ENCODE measurements at regions of chr6 and their contacts with region 1.

Region 1: DNA sequence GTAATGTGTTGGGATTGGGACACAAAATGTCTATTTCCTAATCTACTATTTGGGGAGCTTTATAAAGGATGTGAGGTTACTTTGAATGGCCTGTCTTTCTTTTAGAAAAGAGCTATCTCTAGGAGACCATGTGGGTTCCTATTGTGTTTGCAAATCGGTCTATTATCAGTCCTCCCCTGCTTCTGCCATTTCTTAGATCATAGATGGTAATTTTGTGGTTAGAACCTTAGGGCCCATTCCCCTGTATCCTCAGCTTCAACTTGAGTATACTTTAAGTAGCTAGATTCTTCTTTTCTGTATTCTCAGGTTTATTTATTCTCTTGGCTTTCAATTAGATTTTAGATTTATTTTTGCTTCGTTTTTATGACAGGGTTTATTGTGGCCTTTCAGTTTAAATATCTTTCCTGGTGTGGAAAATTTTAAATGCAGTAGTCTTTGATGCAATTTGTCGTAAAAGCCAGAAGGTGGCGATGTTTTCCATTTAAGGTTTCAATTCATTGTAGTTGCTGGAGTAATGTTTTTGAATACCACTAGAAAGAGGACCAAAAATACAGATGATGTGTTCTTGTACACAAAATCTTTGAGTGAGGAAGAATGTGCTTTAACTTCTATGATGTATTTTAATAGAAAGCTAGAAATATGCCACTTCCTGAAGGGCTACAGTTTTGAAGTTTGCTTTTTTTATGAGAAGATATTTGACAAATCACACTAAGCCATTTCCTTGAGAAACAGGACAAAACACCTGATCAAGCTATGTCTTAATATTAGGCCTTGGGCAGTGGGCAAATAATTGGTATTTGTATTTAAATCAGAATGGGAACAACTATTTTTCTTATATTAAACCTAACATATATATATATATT is 20.3 kb downstream of the TBPL1 start:
- DNase-seq: no peak
- ATAC-seq: peak in 3 of 4 donors; percentile 72 to 82 (median 80)
- H3K4me3 ChIP-seq: no peak overlapping the region
- H3K27ac ChIP-seq: no peak overlapping the region
- H3K4me1 ChIP-seq: peaks cover under 1 to 7% (median 3%) of the 10 kb centered on the region in 3 donors
- H3K27me3 ChIP-seq: no peaks in the 10 kb centered on the region
- CTCF ChIP-seq: peak; percentile 44 to 60 (median 54)

Region 2: GRCh38 chr6:134063966-134064445 is 90.7 kb after region 1 on chr6:
- intact Hi-C with region 1: loop called in 1 of 3 experiments (anchors 10 kb)
- DNase-seq: peak in 4 of 6 donors; percentile 28 to 69 (median 46)
- ATAC-seq: peak; percentile 81 to 95 (median 94)
- H3K4me3 ChIP-seq: no peak overlapping the region
- H3K27ac ChIP-seq: no peak overlapping the region
- H3K4me1 ChIP-seq: peaks cover 1 to 2% (median 2%) of the 10 kb centered on the region in 3 donors
- H3K27me3 ChIP-seq: no peaks in the 10 kb centered on the region
- CTCF ChIP-seq: peak; percentile 46 to 77 (median 70)

Region 3: GRCh38 chr6:134117370-134117807 is 144.0 kb after region 1 on chr6:
- intact Hi-C with region 1: no loop called
- DNase-seq: no peak
- ATAC-seq: no peak
- H3K4me3 ChIP-seq: no peak overlapping the region
- H3K27ac ChIP-seq: no peak overlapping the region
- H3K4me1 ChIP-seq: no peaks in the 10 kb centered on the region
- H3K27me3 ChIP-seq: no peaks in the 10 kb centered on the region
- CTCF ChIP-seq: no peak